PC-3 (cell line): ENCODE measurements at regions of chr18 and their contacts with region 1.

Region 1: GRCh38 chr18:24118750-24119577 is 19.9 kb upstream of the CABYR start:
- DNase-seq: peak; percentile 87
- ATAC-seq: peak; percentile 84
- H3K4me3 ChIP-seq: no peak overlapping the region
- H3K27ac ChIP-seq: peak overlapping the region; percentile 5; the same call in 1 of the 2 replicates
- H3K4me1 ChIP-seq: peaks cover 7% of the 10 kb centered on the region
- H3K27me3 ChIP-seq: no peaks in the 10 kb centered on the region
- CTCF ChIP-seq: peak; percentile 89

Region 2: DNA sequence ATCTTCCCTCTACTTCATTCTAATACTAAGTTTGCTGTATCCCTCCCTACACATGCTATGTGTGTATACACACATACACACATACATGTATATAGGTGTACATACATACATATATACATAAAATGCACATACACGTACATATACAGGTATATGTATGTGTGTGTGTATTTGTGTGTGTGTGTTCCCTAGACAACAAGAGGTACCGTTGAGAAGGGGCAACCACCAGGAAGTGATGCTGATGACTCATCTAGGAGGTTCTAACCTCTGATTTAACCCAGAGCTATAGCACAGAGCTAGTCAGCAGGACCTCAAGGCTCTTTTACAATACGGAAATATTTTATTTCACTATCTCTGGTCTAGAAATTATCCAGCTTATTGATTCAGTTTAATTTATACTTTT is 290.5 kb before region 1 on chr18:
- CTCF ChIA-PET with region 1: no interaction called
- POLR2A ChIA-PET with region 1: no interaction called
- intact Hi-C with region 1: loop called (anchors 5 kb)
- DNase-seq: peak; percentile 88
- ATAC-seq: peak; percentile 94
- H3K4me3 ChIP-seq: no peak overlapping the region
- H3K27ac ChIP-seq: peak overlapping the region; percentile 79
- H3K4me1 ChIP-seq: peaks cover 25% of the 10 kb centered on the region
- H3K27me3 ChIP-seq: no peaks in the 10 kb centered on the region
- CTCF ChIP-seq: no peak

Region 3: DNA sequence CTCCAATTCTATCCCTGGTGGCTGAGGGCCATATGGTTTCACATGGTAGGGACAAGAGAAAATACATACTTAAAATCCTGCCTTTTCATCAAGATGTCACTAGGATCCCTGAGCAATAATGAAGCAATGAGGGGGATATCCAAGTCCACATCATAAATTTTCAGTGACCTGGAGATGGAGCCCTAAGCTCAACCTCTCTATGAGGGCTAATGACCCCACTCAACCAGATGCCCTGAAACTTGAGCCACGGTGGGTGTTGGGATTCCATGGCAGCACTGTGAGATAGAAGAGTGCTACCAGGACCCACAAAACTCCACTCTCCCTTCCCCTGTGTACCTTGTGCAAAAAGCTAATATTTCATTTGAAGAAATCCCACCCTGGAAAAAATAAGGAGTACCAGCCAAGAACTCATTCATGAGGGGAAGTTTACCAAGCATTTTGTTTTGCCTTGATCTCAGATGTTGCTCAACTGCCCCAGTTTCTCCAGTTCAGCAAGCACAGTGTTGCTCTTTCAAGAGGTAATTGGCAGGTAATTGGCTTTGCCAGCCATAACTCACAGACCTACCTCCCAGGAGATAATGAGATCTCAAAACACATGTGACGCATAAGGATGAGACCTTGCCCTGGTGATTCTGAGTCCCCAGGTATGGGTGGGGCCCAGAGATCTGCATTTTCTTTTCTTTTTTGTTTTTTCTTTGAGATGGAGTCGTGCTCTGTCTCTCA is 155.4 kb before region 1 on chr18:
- CTCF ChIA-PET with region 1: interaction called, 6 read pairs
- POLR2A ChIA-PET with region 1: no interaction called
- intact Hi-C with region 1: loop called (anchors 2 kb)
- DNase-seq: peak; percentile 32
- ATAC-seq: peak; percentile 46; the same call in 1 of the 2 replicates
- H3K4me3 ChIP-seq: no peak overlapping the region
- H3K27ac ChIP-seq: no peak overlapping the region
- H3K4me1 ChIP-seq: no peaks in the 10 kb centered on the region
- H3K27me3 ChIP-seq: no peaks in the 10 kb centered on the region
- CTCF ChIP-seq: peak; percentile 44; the same call in 1 of the 2 replicates

Region 4: GRCh38 chr18:24014062-24014985 is 104.6 kb before region 1 on chr18 and contains the start of gene TTC39C:
- CTCF ChIA-PET with region 1: no interaction called
- POLR2A ChIA-PET with region 1: no interaction called
- intact Hi-C with region 1: loop called (anchors 2 kb)
- DNase-seq: peak; percentile 70
- ATAC-seq: peak; percentile 66
- H3K4me3 ChIP-seq: peak within 1 kb of the TSS; percentile 91
- H3K27ac ChIP-seq: peak within 1 kb of the TSS; percentile 26
- H3K4me1 ChIP-seq: peaks cover 14% of the 10 kb centered on the region
- H3K27me3 ChIP-seq: no peaks in the 10 kb centered on the region
- CTCF ChIP-seq: no peak
- total RNA-seq, gene TTC39C: 24.7 and 26.3 TPM in 2 replicates

Region 5: GRCh38 chr18:24051031-24051947 is 67.7 kb before region 1 on chr18:
- CTCF ChIA-PET with region 1: no interaction called
- POLR2A ChIA-PET with region 1: no interaction called
- intact Hi-C with region 1: loop called (anchors 5 kb)
- DNase-seq: peak; percentile 69
- ATAC-seq: peak; percentile 79
- H3K4me3 ChIP-seq: peak overlapping the region; percentile 26; the same call in 1 of the 2 replicates
- H3K27ac ChIP-seq: peak overlapping the region; percentile 84
- H3K4me1 ChIP-seq: peaks cover 22% of the 10 kb centered on the region
- H3K27me3 ChIP-seq: no peaks in the 10 kb centered on the region
- CTCF ChIP-seq: no peak